HepG2 (cell line): ENCODE measurements at regions of chr2 and their contacts with region 1.

Region 1: GRCh38 chr2:12479065-12479601 is 237.6 kb upstream of the TRIB2 start:
- DNase-seq: no peak
- ATAC-seq: no peak
- H3K4me3 ChIP-seq: no peak overlapping the region
- H3K27ac ChIP-seq: no peak overlapping the region
- H3K4me1 ChIP-seq: no peaks in the 10 kb centered on the region
- H3K27me3 ChIP-seq: no peaks in the 10 kb centered on the region; a peak in 1 of 5 replicates
- CTCF ChIP-seq: no peak
- EP300 ChIP-seq: no peak
- POLR2A ChIP-seq: no peak
- RAD21 ChIP-seq: no peak

Region 2: DNA sequence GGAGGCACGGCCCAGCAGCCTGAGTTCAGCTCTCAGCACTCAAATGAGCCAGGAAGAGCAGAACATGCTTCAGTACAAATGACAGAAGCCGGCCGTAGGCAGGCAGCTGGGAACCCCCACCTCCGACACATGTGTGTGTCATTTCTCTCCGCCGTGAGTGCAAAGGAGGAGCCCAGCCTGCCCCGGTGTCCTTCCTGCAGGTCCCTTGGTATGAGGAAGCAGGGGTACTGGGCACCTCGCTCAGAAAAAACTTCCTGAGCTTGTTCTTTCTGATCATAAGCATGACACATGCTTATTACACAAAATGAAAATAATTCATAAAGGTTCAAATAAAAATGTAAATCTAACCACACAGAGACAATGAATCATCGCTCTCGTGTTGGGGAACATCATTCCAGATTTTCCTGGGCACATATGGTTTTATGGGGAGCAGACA is 1532.1 kb before region 1 on chr2:
- CTCF ChIA-PET with region 1: no interaction called
- POLR2A ChIA-PET with region 1: no interaction called
- in situ Hi-C with region 1: no loop called
- intact Hi-C with region 1: loop called (anchors 10 kb)
- DNase-seq: no peak
- ATAC-seq: no peak
- H3K4me3 ChIP-seq: no peak overlapping the region
- H3K27ac ChIP-seq: no peak overlapping the region
- H3K4me1 ChIP-seq: no peaks in the 10 kb centered on the region
- H3K27me3 ChIP-seq: peaks cover 8 to 61% of the 10 kb centered on the region in 2 experiments; a peak in 4 of 5 replicates
- CTCF ChIP-seq: no peak
- EP300 ChIP-seq: no peak
- POLR2A ChIP-seq: no peak
- RAD21 ChIP-seq: no peak

Region 3: GRCh38 chr2:12326449-12327190 is 152.5 kb before region 1 on chr2:
- CTCF ChIA-PET with region 1: no interaction called
- POLR2A ChIA-PET with region 1: no interaction called
- in situ Hi-C with region 1: no loop called
- intact Hi-C with region 1: no loop called
- DNase-seq: peak; percentile 34
- ATAC-seq: peak; percentile 99
- H3K4me3 ChIP-seq: no peak overlapping the region
- H3K27ac ChIP-seq: no peak overlapping the region
- H3K4me1 ChIP-seq: no peaks in the 10 kb centered on the region
- H3K27me3 ChIP-seq: no peaks in the 10 kb centered on the region; a peak in 1 of 5 replicates
- CTCF ChIP-seq: peak; percentile 69
- EP300 ChIP-seq: no peak
- POLR2A ChIP-seq: no peak
- RAD21 ChIP-seq: 0 out of 2 replicates have a peak, but pooled peaks have one; percentile 19

Region 4: GRCh38 chr2:12824778-12825379 is 345.7 kb after region 1 on chr2:
- CTCF ChIA-PET with region 1: no interaction called
- POLR2A ChIA-PET with region 1: no interaction called
- in situ Hi-C with region 1: no loop called
- intact Hi-C with region 1: no loop called
- DNase-seq: no peak
- ATAC-seq: no peak
- H3K4me3 ChIP-seq: no peak overlapping the region
- H3K27ac ChIP-seq: no peak overlapping the region
- H3K4me1 ChIP-seq: no peaks in the 10 kb centered on the region
- H3K27me3 ChIP-seq: no peaks in the 10 kb centered on the region
- CTCF ChIP-seq: no peak
- EP300 ChIP-seq: no peak
- POLR2A ChIP-seq: no peak
- RAD21 ChIP-seq: no peak